Psoas muscle (tissue), 8 donors: ENCODE measurements at regions of chr21 and their contacts with region 1.

Region 1: GRCh38 chr21:45050786-45051489 is 23.4 kb upstream of the ADARB1 start:
- DNase-seq: no peak
- ATAC-seq: peak; percentile 36 to 49 (median 47)
- H3K4me3 ChIP-seq: no peak overlapping the region
- H3K27ac ChIP-seq: peak overlapping the region; percentile 83
- H3K4me1 ChIP-seq: peaks cover 43% of the 10 kb centered on the region
- H3K27me3 ChIP-seq: no peaks in the 10 kb centered on the region
- CTCF ChIP-seq: no peak

Region 2: DNA sequence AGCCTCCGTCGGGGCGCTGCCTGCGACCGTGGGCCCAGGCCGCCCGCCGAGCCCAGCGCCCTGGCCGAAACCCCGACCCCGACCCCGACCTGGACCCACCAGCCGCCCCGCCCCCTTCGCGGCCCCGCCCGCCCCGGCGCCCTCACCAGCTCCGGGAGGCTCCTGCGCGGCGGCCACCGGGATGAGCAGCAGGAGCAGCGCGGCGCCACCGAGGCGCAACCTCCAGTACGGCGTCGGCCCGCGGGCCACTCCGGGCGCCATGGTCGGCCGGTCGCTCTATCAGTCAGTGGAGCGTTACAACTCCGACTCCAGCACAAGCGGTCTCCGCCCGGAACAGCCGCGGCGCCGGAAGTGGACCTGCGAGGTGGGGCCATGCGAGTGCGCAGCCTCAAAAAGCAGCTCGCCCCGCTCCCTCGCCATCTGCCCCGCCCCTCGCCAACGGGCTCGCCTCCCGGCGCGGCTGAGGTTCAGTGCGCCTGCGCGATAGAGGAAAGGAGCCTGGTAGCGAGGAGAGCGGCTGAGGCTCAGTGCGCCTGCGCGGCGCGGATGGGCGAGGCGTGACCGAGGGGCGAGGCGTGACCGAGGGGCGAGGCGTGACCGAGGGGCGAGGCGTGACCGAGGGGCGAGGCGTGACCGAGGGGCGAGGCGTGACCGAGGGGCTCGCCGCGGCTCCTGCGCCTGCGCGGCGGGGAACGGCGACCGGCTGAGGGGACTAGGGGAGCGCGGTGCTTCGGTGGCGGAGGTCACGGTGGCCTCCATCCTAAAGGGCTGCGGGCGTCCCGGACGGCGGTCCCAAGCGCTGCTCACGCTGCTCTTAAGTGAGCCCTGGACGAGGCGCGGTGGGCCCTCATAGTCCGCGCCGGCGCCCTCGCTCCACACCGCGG is 177.3 kb before region 1 on chr21 and contains the start of gene PTTG1IP:
- intact Hi-C with region 1: no loop called
- DNase-seq: peak; percentile 99 to 100
- ATAC-seq: peak; percentile 76 to 82 (median 80)
- H3K4me3 ChIP-seq: peak within 1 kb of the TSS; percentile 90
- H3K27ac ChIP-seq: peak within 1 kb of the TSS; percentile 97
- H3K4me1 ChIP-seq: peaks cover 49% of the 10 kb centered on the region
- H3K27me3 ChIP-seq: no peaks in the 10 kb centered on the region
- CTCF ChIP-seq: no peak
- total RNA-seq, gene PTTG1IP: 49.6 to 72.1 (median 66.5) TPM

Region 3: DNA sequence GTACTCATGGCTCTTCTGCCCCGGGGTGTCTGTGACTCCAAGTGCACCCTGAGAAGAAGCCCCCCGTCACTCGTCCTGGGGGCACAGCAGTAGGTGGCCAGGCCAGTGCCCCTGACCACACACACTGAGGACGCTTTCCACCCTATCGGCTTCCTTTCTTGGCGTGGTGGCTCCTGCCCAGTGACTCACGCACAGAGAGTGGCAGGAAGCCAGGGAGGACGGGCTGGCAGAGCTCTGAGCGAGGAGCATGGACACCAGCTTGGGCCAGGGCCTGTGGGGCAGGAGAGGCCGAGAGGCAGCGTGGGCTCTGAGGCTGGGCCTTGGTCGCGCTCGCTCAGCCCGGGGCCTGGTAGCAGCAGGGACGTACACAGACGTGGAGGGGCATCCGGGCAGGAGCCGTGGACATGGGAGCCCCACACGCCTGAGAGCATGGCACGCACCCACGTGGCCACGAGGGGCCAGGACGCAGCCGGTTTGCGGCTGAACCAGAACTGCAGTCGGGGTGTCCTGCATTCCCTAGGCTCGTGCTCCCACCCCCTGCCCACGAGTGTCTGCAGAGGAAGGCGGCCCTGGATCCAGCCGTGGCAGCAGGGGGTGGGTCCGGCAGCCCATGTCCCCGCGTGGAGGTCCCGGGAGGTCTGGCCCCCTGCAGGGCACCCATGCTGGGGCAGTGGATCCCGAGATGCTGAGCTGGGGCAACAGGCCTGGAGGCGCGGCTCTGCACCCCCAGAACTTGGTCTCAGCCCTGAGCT is 49.8 kb before region 1 on chr21:
- intact Hi-C with region 1: no loop called
- DNase-seq: peak; percentile 88 to 93
- ATAC-seq: peak; percentile 93 to 97 (median 94)
- H3K4me3 ChIP-seq: peak overlapping the region; percentile 24
- H3K27ac ChIP-seq: no peak overlapping the region
- H3K4me1 ChIP-seq: peaks cover 12% of the 10 kb centered on the region
- H3K27me3 ChIP-seq: peaks cover 0 to 2% (median 0%) of the 10 kb centered on the region in 3 donors
- CTCF ChIP-seq: no peak

Region 4: GRCh38 chr21:45129189-45129923 is 78.4 kb after region 1 on chr21:
- intact Hi-C with region 1: loop called in 1 of 2 experiments (anchors 5 kb)
- DNase-seq: peak; percentile 62 to 75
- ATAC-seq: peak; percentile 63 to 66 (median 64)
- H3K4me3 ChIP-seq: peak overlapping the region; percentile 25
- H3K27ac ChIP-seq: peak overlapping the region; percentile 69
- H3K4me1 ChIP-seq: peaks cover 65% of the 10 kb centered on the region
- H3K27me3 ChIP-seq: no peaks in the 10 kb centered on the region
- CTCF ChIP-seq: no peak